Aorta (tissue), 5 donors: ENCODE measurements at regions of chr2 and their contacts with region 1.

Region 1: DNA sequence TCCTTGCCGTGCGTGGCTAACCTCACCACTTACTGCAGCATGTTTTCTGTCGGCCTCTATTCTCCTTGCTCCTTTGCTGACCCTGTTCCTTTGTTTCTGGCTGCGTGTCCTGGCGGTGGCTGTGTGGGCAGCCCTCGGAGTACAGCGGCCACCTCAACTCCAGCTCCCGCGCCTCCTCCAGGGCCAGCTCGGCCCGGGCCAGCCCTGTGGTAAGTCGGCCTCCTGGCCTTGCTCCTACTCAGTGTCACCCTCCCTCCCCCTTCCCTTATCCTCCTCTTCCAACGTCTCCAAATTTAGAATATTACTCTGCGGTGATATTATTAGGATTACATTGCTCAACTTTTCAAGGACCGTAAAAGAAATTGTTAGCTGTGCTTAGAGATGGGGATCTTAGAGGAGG is 59.5 kb upstream of the RBM44 start:
- DNase-seq: peak; percentile 84 to 91
- ATAC-seq: peak; percentile 92
- H3K4me3 ChIP-seq: no peak overlapping the region
- H3K27ac ChIP-seq: peak overlapping the region in 1 of 2 donors; percentile 90
- H3K4me1 ChIP-seq: peaks cover 2% of the 10 kb centered on the region in 2 donors
- H3K27me3 ChIP-seq: no peaks in the 10 kb centered on the region

Region 2: DNA sequence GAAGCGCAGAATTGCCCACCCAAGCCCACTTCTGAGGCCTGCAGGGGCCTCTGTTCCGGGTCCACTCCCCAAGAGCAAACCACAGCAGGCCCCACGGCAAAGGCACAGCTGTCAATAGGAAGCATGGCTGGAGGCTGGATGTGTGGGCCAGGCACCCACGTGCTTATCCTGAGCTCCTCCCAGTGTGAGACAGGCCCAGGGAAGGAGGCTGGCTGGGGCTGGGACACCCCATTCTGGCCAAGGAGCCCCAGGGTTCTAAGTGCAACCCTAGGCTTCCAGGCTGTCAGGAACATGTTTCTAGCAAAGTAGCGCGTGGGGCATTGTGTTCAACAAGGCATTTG is 142.6 kb before region 1 on chr2:
- intact Hi-C with region 1: loop called (anchors 5 kb)
- DNase-seq: peak in 1 of 2 donors; percentile 69
- ATAC-seq: no peak
- H3K4me3 ChIP-seq: no peak overlapping the region
- H3K27ac ChIP-seq: peak overlapping the region in 1 of 2 donors; percentile 7
- H3K4me1 ChIP-seq: peaks cover 0 to 2% of the 10 kb centered on the region in 2 donors
- H3K27me3 ChIP-seq: no peaks in the 10 kb centered on the region

Region 3: GRCh38 chr2:237691908-237692600 is 47.0 kb before region 1 on chr2:
- intact Hi-C with region 1: loop called in 1 of 2 experiments (anchors 2 kb)
- DNase-seq: peak; percentile 98 to 99
- ATAC-seq: peak; percentile 85
- H3K4me3 ChIP-seq: peak overlapping the region; percentile 70 to 86
- H3K27ac ChIP-seq: peak overlapping the region; percentile 78 to 90
- H3K4me1 ChIP-seq: peaks cover 3 to 8% of the 10 kb centered on the region in 2 donors
- H3K27me3 ChIP-seq: no peaks in the 10 kb centered on the region

Region 4: DNA sequence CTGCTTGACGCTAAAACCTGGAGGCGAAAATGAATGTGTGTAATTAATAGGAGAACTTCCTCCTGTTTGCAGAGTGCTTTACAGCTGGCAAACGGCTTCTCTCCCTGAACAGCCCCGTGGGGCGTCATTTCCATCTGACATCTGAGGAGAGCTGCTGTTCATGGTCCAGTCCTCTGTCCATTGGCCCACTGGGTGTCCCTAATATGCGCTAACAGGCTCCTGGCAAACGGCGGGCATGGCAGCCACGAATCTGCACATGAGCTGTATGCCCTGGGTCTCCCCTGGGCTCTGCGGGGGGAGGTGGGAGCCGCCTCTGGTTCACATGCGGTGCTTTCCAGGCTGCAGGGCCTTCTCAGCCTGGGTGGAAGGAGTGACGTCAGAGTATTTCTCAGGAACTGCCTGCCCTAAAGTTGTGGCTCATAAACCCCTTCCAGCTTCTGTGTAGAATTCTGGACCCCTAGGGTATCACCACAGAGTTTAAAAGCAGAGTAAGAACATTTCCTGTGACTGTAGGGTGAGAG is 38.5 kb before region 1 on chr2:
- intact Hi-C with region 1: loop called in 1 of 2 experiments (anchors 5 kb)
- DNase-seq: peak; percentile 84 to 90
- ATAC-seq: peak; percentile 68
- H3K4me3 ChIP-seq: no peak overlapping the region
- H3K27ac ChIP-seq: peak overlapping the region in 1 of 2 donors; percentile 70
- H3K4me1 ChIP-seq: peaks cover 2 to 21% of the 10 kb centered on the region in 2 donors
- H3K27me3 ChIP-seq: no peaks in the 10 kb centered on the region